ENCODE measurements at regions of chr10 and their contacts with region 1.

Region 1: DNA sequence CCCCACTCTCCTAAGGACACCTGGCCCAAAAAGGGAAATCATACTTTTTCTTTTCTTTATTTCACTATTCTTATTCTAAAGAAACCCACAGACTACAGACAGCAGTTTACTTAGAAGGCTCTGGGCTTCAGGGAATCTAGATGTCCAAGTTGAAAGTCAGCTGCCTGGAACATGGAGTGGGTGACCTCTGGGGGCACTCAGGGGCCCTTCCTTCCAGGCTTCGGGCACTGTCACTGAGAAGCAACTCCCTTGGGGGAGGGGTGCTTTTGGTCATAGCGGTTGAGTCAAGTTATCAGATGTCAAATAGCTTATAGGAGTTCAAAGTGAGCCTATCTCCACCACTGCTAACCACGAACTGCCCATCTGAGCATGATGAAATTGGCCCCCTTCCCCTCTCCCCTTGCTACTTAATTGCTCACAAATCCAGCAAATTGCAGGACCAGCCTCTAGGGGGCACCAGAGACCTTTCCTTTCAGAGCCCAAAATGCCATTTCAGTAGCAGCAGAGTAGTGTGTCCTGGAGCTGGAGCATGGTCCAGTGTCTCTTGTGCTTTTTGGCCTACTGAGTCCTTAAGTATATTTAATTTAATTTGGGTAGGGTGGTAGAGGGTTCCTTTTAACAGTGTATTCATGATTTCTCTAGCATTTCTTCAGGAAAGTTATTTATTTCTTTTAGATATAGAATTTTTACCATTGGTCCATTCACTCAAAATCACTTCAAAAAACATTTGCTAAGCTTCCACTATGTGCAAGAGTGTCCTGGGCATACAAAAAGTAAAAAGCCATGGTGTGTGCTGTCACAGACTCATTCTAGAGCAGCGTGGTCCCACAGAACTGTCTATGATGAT is 463.8 kb downstream of the KCNMA1 start:
- DNase-seq: peak; percentile 64 to 81 (median 77)
- H3K4me3 ChIP-seq: no peak overlapping the region
- H3K27ac ChIP-seq: no peak overlapping the region
- H3K4me1 ChIP-seq: no peaks in the 10 kb centered on the region
- H3K27me3 ChIP-seq: no peaks in the 10 kb centered on the region
- CTCF ChIP-seq: peak; percentile 80 to 86 (median 86)
- EP300 ChIP-seq: no peak
- POLR2A ChIP-seq: no peak

Region 2: GRCh38 chr10:77247031-77247990 is 73.5 kb after region 1 on chr10:
- intact Hi-C with region 1: loop called in 1 of 4 experiments (anchors 10 kb)
- DNase-seq: no peak
- H3K4me3 ChIP-seq: no peak overlapping the region
- H3K27ac ChIP-seq: no peak overlapping the region
- H3K4me1 ChIP-seq: peaks cover 30% of the 10 kb centered on the region
- H3K27me3 ChIP-seq: no peaks in the 10 kb centered on the region
- CTCF ChIP-seq: no peak
- EP300 ChIP-seq: no peak
- POLR2A ChIP-seq: no peak

Region 3: DNA sequence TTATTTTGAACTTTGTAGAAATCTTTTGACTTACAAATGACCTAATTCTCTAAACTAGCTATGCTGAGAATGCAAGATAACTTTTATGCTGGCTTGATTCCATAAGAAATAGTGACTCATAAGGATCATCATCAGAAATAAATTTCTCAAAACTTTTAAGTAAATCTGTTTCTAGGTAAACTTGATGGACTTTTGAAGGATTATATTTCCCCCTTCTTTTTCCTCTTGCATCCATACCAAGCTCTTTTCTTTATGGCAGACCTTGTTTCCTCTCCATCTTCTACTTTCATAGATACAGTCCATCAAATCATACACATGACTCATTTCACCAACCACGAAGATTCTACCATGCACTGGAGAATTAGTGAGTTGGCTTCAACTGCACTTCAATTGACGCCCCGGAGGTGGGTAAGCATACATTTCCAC is 127.5 kb after region 1 on chr10:
- intact Hi-C with region 1: loop called in 1 of 4 experiments (anchors 10 kb)
- DNase-seq: no peak
- H3K4me3 ChIP-seq: no peak overlapping the region
- H3K27ac ChIP-seq: no peak overlapping the region
- H3K4me1 ChIP-seq: peaks cover 4% of the 10 kb centered on the region
- H3K27me3 ChIP-seq: no peaks in the 10 kb centered on the region
- CTCF ChIP-seq: no peak
- EP300 ChIP-seq: no peak
- POLR2A ChIP-seq: no peak

Region 4: GRCh38 chr10:77391605-77392235 is 217.9 kb after region 1 on chr10:
- intact Hi-C with region 1: loop called in 1 of 4 experiments (anchors 10 kb)
- DNase-seq: peak; percentile 75 to 86 (median 77)
- H3K4me3 ChIP-seq: no peak overlapping the region
- H3K27ac ChIP-seq: no peak overlapping the region
- H3K4me1 ChIP-seq: peaks cover 19% of the 10 kb centered on the region
- H3K27me3 ChIP-seq: no peaks in the 10 kb centered on the region
- CTCF ChIP-seq: peak in 1 of 3 donors; percentile 36
- EP300 ChIP-seq: no peak
- POLR2A ChIP-seq: no peak

Region 5: DNA sequence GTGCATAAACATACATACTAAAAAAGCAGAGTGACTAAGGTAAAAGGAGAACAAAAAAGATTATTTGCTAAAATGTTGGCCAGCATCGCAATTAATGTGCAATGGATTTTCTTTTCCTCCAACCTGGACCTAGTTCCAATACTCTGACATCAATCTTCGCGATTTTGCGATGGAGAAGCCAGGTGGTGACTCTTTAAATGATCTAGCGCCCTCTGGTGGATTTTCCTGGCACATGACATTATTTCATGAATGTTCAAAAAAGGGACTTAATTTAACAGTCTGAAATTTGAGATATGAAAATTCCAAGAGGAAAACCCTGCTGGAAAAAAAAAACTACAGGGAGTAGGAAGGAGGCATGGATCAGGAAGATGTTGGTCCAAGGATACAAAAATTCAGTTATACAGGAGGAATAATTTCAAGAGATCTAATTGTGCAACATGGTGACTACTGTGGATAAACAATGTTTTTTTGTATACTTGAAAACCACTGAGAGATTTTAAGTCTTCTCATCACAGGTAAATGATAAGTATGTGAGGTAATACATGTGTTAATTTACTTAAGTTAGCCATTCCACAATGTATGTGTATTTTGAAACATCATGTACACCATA is 468.1 kb after region 1 on chr10:
- intact Hi-C with region 1: loop called (anchors 2 to 5 kb)
- DNase-seq: peak in 4 of 5 donors; percentile 42 to 72 (median 60)
- H3K4me3 ChIP-seq: no peak overlapping the region
- H3K27ac ChIP-seq: no peak overlapping the region
- H3K4me1 ChIP-seq: peaks cover 3% of the 10 kb centered on the region
- H3K27me3 ChIP-seq: no peaks in the 10 kb centered on the region
- CTCF ChIP-seq: peak; percentile 61 to 87 (median 80)
- EP300 ChIP-seq: no peak
- POLR2A ChIP-seq: no peak

Region 6: DNA sequence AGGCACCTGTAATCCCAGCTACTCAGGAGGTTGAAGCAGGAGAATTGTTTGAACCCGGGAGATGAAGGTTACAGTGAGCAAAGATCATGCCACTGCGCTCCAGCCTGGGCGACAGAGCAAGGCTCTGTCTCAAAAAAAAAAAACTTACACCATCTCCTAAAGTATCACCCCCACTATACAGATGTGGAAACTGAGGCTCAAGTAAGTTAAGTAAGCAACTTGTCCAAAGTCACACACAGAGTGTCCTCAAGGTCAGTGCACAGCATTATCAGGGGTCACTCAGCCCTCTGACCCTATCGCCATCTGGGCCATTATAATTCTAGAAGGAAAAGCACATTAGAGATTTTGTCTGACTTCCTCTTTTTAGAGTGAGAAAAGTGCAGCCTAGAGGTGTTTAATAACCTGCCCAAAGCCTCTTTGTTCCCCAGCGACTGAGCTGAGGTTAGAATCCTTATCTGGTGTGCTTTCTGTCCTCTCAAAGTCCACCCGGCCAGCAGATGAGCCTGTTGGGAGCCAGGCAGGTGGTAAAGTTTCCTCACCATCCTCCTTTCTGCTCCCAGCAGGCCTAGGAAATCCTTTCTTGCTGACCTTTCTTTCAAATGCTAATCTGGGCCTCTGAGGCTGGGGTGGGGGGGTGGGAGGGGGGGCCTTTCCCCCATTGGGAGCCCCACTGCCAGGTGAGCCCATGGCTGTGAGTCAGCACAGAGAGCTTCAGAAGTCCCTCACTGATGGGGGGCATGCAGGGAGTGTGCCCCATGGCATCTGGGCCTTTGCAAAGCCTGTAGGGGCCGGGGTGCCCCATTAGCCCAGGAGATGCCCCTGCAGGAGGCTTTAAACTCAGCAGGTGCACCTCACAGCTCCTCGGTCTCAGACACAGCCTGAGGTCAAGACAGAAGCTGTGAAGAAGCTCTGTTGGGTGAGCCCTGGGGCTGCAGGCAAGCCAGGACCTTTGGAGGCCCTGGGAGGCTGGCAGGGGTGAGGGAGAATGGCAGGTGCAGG is 475.8 kb after region 1 on chr10:
- intact Hi-C with region 1: loop called in 3 of 4 experiments (anchors 2 to 5 kb)
- DNase-seq: no peak
- H3K4me3 ChIP-seq: no peak overlapping the region
- H3K27ac ChIP-seq: no peak overlapping the region
- H3K4me1 ChIP-seq: no peaks in the 10 kb centered on the region
- H3K27me3 ChIP-seq: no peaks in the 10 kb centered on the region
- CTCF ChIP-seq: no peak
- EP300 ChIP-seq: no peak
- POLR2A ChIP-seq: no peak

Region 7: DNA sequence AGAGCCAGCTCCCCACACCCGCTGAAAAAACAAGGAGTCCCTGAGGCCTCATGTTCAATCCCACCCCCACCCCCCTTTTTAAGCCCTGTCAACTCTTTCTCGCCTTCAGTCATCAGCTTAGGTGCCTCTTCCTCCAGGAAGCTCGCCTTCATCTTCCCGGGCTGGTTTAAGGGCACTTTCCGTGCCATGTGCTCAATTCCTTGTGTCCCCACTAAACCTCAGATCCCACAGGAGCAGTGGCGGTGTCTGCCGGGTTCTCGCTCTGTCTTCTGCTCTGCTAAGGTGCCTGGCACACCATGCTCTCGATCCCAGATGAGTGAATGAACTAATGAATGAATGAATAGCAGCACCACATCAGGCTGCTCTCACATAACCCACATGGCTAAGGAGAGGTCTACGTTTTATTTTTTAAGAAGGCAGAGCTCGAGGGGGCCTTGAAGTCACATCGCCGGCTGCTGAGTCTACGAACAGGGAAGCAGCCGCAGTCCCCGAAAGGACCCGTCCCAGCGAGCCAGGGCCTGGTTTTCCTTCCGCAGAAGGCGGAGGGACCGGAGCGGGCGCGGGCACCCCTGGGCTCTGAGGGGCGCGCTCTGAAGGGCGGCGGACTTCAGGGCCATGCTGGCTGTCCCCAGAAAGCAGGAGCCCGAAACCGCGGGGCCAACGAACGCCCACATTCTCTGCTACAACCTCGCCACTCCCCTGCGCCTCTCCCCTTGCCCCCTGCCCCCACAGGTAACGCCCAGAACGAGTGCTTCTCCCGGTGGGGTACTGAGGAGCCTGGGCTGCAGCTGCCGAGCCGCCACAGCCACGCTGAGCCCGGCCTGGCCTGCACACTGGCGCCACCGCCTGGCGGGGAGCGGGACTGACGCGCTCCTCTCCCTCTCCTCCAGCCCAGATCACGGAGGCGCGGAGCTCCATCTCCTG is 537.2 kb after region 1 on chr10:
- intact Hi-C with region 1: loop called in 2 of 4 experiments (anchors 5 kb)
- DNase-seq: peak; percentile 48 to 87 (median 66)
- H3K4me3 ChIP-seq: peak overlapping the region; percentile 33
- H3K27ac ChIP-seq: no peak overlapping the region
- H3K4me1 ChIP-seq: peaks cover 2% of the 10 kb centered on the region
- H3K27me3 ChIP-seq: no peaks in the 10 kb centered on the region
- CTCF ChIP-seq: peak; percentile 57 to 82 (median 79)
- EP300 ChIP-seq: no peak
- POLR2A ChIP-seq: no peak

Measured in ovary (tissue), 10 donors.